AG04449 (cell line): ENCODE measurements at regions of chr2 and their contacts with region 1.

Region 1: DNA sequence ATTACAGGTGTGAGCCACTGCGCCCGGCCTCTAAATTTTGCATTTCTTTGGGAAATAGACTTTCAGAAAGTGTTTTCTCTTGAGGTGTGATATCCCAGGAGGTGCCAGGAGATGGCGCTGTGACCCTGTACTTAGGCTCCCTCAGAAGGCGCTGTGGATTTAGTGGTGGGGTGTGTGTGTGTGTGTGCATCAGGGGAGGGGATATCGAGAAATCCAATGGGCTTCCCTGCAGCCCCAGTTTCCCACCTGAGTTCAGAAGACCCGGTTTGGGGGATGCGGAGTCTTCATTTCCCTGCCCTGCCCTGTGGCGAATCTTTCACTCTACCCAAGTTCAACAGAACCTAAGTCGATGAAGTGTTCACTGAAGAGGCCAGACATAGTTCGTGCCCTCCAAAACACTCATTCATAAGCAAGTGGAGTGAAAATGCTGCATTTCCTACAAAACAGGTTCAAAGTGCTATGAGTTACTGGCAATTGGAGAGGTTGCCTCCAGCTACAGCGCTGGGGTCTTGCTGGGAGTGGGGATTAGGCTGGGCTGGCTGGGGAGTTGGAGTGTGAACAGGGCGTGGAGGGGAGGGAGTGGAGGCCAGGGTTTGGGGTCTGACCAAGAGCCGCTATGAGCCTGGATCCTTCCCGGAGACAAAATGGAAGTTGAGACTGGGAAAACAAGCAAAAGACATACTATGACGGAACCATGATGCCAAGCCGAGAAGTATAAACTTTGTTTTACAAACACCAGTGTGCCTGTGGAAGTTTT is 6.5 kb upstream of the WNT6 start:
- DNase-seq: no peak
- H3K4me3 ChIP-seq: no peak overlapping the region
- CTCF ChIP-seq: peak; percentile 76

Region 2: DNA sequence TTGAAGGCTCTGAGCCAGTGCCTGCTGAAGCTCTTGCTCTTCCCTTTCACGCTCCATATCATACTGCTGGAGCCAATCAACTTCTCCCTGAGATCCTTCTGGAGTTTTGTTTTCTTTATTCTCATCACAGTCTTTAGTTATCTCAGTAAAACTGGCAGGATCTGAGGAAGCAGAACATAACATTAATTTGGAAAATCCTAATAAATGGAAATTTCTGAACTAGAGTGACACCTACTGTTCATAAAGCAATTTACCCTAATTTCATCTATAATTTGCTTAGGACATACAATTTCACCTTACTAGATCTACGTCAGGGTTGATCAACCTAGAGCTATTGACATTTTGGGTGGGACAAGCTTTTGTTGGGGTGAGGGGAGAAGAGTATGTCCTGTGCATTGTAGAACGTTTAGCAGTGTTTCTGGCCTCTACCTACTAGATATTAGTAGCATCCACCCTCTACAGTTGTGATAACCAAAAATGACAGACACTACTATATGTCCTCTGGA is 387.0 kb before region 1 on chr2:
- CTCF ChIA-PET with region 1: no interaction called
- POLR2A ChIA-PET with region 1: no interaction called
- DNase-seq: no peak
- H3K4me3 ChIP-seq: no peak overlapping the region
- CTCF ChIP-seq: no peak

Region 3: DNA sequence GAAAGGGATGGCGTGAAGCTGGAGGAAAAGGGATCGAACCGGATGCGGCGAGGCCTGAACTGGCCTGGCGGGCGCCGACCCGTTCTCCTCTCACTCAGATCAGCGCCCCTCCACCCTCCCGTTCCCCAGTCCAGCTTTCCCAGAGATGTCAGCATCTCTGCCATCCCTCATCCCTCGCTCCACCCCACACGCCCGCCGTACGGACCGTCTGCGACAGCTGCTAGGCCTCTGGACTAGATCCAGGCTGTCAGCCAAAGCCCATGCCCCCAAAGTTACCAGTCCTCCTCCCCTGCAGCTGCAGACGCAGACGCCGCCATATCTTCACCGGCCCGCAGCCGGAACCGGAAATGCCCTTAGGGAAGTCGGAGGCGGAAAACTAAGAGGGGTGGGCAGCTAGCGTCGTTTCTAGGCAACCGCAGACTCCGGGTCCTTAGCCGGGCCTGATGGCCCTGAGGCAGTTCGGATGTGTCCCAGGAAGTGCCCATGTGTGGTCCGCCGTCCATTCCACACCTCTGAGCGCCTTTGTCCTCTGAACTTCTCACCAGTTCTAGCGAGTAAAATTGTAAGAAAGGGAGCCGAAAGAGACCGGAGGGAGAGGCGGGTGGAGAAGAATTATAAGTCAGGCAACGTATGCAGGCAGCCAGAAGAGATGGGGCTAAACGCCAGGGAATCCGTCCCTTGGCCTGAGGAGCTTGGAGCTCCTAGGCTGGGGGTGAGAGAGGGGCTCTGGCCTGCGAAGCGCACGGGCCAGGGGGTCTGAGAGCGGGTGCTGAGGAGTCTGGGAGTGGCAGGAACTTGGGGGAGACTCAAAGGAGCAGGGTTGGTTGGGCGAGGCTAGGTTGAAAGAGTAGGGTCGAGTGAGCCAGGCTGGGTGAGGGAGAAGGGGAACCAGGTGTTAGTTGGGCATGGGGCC is 181.2 kb before region 1 on chr2 and contains the starts of genes RNF25 and STK36:
- CTCF ChIA-PET with region 1: interaction called, 41 read pairs
- POLR2A ChIA-PET with region 1: no interaction called
- DNase-seq: no peak
- H3K4me3 ChIP-seq: peak within 1 kb of the TSS; percentile 88
- CTCF ChIP-seq: no peak

Region 4: GRCh38 chr2:218710687-218711549 is 142.2 kb before region 1 on chr2 and contains the start of gene TTLL4:
- CTCF ChIA-PET with region 1: interaction called, 97 read pairs
- POLR2A ChIA-PET with region 1: no interaction called
- DNase-seq: no peak
- H3K4me3 ChIP-seq: peak within 1 kb of the TSS; percentile 86
- CTCF ChIP-seq: peak; percentile 93

Region 5: GRCh38 chr2:218733171-218734021 is 119.7 kb before region 1 on chr2:
- CTCF ChIA-PET with region 1: interaction called, 106 read pairs
- POLR2A ChIA-PET with region 1: no interaction called
- DNase-seq: peak; percentile 36
- H3K4me3 ChIP-seq: no peak overlapping the region
- CTCF ChIP-seq: no peak

Region 6: DNA sequence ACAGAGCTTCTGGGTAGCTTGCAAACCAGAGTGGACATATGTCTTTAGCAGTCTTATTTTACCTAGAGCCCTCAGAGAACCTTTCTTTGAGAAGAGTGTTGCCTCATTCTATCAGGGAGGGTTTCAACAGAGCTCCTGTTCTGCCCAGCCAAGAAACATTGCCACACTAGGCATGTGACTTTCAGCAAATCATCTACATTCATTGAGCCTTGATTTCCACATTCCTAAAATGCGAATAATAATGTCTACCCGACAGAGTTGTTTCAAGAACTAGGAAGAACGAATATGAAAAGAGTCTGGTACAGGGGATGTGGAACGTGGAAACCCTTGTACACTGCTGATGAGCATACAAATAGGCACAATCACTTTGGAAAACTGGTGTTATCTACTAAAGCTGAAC is 13.7 kb before region 1 on chr2:
- CTCF ChIA-PET with region 1: interaction called, 28 read pairs
- POLR2A ChIA-PET with region 1: no interaction called
- DNase-seq: peak; percentile 23
- H3K4me3 ChIP-seq: no peak overlapping the region
- CTCF ChIP-seq: no peak

Region 7: DNA sequence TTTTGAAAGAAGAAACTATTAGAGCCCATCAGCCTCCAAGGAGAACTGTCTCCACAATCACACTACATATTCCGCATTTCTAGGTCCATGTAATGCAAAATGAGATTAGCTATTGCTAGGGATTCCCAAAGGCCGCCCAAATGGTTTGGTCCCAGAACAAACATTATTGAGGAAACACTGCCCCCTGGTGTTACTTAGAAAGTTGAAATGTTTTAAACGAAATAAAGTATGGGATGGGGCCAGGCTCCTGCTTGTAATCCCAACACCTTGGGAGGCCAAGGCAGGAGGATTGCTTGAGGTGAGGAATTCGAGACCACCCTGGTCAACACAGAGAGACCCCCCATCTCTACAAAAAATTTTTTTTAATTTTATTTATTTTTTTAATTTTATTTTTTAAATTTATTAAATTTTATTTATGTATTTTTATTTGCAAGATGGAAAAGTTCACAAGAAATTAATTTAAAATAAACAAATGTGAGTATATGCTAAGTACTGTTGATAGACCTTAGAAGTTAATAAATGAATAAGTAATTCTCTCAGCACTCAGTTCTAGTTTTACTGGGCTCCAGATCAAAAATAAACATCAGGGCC is 302.1 kb after region 1 on chr2:
- CTCF ChIA-PET with region 1: interaction called, 14 read pairs
- POLR2A ChIA-PET with region 1: no interaction called
- DNase-seq: no peak
- H3K4me3 ChIP-seq: no peak overlapping the region
- CTCF ChIP-seq: peak; percentile 34

Region 8: GRCh38 chr2:219327719-219328118 is 474.6 kb after region 1 on chr2:
- CTCF ChIA-PET with region 1: no interaction called
- POLR2A ChIA-PET with region 1: no interaction called
- DNase-seq: no peak
- H3K4me3 ChIP-seq: no peak overlapping the region
- CTCF ChIP-seq: no peak

Region 9: DNA sequence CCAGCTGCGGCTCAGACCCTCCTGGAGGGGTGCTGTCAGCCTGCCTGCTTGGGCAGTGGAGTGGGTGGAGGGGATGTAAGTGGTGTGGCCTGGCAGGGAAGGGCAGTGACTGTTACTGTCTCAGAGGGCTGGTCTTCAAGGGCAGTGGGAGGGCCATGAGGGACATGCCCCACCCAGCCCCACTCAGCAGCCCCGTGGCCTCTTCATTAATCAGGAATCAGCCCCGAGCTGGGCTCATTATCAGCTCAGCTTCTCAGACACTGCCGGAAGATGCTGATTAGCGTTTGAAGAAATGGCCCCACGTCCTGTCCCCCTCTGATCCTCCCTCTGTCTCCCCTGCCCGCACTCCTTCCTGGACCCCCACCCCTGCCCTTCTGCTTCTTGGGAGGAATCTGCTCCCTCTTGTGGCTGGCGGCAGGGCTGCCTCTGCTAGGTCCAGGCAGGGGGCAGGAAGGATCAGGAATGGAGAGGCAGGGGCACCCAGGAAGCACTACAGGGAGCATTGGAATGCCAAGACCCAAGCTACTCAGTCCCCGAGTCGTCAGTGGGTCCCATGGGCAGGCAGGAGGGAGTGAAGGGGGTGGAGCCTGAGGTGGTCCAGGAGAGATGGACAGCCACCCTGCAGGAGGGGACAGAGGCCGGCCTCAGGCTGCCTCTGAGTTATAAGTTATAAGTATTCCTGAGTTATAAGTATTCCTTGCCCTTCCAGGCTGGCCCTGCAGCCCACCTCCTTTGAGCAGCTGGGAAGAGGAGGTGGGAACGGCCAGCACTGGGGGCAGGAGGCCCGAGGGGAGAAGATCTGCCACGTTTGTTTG is 668.2 kb after region 1 on chr2:
- CTCF ChIA-PET with region 1: no interaction called
- POLR2A ChIA-PET with region 1: no interaction called
- DNase-seq: no peak
- H3K4me3 ChIP-seq: no peak overlapping the region; the same call in none of the 2 replicates
- CTCF ChIP-seq: peak; percentile 94